ENCODE measurements at regions of chr13 and their contacts with region 1.

Region 1: DNA sequence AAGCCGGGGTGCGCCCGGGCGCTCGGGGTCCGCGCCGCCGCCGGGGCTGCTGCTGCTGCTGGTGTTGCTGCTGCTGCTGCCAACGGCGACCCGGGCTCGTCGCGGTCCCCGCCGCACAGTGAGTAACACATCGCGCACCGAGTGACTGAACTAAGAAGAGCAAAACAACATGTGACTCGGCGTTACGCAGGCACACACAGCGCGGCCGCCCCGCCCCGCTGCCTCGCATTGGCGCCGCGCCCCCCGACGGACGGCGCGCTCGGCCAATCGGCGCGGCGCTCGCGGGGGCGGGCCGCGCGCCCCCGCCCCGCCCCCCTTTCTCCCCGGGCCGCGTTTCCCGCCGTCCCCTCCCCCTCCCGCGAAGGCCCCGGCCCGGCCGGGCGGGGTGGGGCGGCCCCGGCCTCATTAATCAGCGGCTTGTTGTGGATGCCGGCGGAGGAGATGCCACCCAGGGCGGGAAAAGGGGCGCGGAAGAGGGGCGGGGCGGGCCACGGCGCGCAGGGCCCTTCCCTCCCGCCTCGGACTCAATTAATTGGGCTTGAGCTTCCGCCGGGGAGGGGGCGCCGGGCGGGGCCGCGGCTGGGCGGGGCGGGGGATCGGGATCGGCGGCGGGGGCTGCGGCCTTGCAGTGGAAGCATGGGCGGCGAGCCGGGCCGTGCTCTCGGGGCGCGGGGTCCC is at the start of gene IRS2:
- DNase-seq: peak; percentile 96
- ATAC-seq: peak; percentile 89
- total RNA-seq, gene IRS2: 24.7 TPM

Region 2: GRCh38 chr13:108961542-108962125 is 825.0 kb before region 1 on chr13:
- intact Hi-C with region 1: loop called (anchors 5 kb)
- DNase-seq: no peak
- ATAC-seq: peak; percentile 87

Region 3: GRCh38 chr13:109145631-109146030 is 641.0 kb before region 1 on chr13:
- intact Hi-C with region 1: loop called (anchors 10 kb)
- DNase-seq: no peak
- ATAC-seq: peak; percentile 88

Region 4: GRCh38 chr13:109336730-109337129 is 449.9 kb before region 1 on chr13:
- intact Hi-C with region 1: no loop called
- DNase-seq: no peak
- ATAC-seq: no peak

Region 5: DNA sequence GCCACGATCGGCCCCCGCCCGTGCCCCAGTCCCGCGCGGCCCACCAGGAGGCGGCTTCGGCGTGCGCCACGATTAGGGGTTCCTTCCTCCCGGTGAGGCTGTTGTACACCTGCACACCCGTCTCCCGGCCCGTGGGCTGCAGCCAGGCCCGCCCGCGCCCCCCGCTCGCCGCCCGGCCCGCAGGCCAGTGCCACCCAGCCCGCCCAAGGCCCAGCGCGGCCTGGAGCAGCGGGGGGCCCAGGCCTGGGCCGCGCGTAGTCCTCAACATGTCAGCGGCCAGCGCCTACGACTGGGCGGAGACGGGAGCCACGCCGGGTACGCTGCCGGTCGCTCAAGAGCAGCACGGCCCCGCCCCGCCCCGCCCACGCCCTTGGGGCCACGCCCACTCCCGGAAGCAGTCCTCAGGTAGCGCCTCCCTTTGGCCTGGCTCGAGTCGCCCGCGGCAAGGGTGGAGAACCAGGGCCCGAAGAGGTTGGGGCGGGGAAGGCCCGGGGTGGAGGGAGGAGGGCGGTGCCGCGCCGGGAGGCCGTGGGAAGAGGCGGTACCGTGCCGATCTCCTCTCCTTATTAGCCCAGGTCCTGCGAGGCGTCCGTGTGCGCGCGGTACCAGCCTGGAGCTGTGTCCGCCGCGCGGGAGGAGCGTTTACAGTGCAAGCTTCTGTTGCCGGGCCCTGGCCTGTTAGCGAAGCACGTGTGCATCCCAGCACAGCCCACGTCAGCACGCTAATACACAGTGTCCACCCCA is 919.4 kb after region 1 on chr13 and contains the start of gene CARS2:
- intact Hi-C with region 1: loop called (anchors 10 kb)
- DNase-seq: peak; percentile 96
- ATAC-seq: peak; percentile 98
- total RNA-seq, gene CARS2: 66.5 TPM